ENCODE measurements at regions of chr17 and their contacts with region 1.

Region 1: GRCh38 chr17:70137451-70138230 is 31.7 kb upstream of the KCNJ2 start:
- DNase-seq: peak; percentile 41
- H3K4me3 Mint-ChIP-seq: no peak overlapping the region
- H3K27ac Mint-ChIP-seq: peak overlapping the region; percentile 61
- H3K4me1 Mint-ChIP-seq: peaks cover 23% of the 10 kb centered on the region
- H3K27me3 Mint-ChIP-seq: peaks cover 5% of the 10 kb centered on the region

Region 2: DNA sequence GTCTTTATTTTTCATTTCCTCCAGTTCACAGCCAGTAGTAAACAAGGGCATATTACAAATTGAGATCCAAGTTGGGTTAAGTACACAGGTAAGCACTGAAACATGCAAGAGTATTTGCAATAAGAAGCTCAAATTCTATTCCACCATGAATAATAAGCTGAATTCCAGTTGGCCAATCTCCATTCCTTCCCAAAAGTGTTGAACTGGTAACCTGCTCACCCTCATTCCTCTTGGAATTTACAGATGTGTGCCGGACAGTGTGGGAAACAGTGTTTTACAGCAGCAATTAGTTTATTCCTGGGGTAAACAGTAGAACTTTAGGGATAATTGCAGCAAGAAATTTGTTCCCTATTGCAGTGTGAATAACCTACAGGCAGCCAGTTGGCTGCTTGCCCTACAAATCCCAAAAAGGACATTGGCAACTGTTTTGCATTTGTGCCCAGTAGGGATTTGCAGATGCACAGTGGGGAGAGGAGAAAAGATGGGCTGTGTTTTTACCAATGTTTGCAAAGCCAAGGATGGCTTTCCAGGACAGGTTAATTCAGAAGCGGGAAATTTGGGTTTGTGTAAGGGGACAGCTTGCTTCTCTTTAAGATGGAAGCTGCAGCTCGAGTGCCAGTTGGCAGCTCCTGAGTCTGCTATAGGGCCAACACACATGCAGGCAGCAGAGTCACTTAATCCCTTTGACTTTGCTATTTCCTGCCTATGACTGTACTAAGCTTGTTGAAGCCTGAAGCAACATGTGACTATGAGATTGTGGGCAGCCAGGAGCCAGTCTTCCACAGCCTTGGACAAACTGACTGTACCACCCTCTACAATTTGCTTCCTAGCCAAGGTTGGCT is 404.2 kb before region 1 on chr17:
- intact Hi-C with region 1: loop called (anchors 5 kb)
- DNase-seq: no peak
- H3K4me3 Mint-ChIP-seq: no peak overlapping the region
- H3K27ac Mint-ChIP-seq: no peak overlapping the region
- H3K4me1 Mint-ChIP-seq: peaks cover 23% of the 10 kb centered on the region
- H3K27me3 Mint-ChIP-seq: peaks cover 1% of the 10 kb centered on the region

Region 3: GRCh38 chr17:69967910-69968411 is 169.7 kb before region 1 on chr17:
- intact Hi-C with region 1: no loop called
- DNase-seq: no peak
- H3K4me3 Mint-ChIP-seq: no peak overlapping the region
- H3K27ac Mint-ChIP-seq: no peak overlapping the region
- H3K4me1 Mint-ChIP-seq: no peaks in the 10 kb centered on the region
- H3K27me3 Mint-ChIP-seq: no peaks in the 10 kb centered on the region

Region 4: GRCh38 chr17:70053241-70054234 is 84.1 kb before region 1 on chr17:
- intact Hi-C with region 1: loop called (anchors 5 kb)
- DNase-seq: no peak
- H3K4me3 Mint-ChIP-seq: no peak overlapping the region
- H3K27ac Mint-ChIP-seq: no peak overlapping the region
- H3K4me1 Mint-ChIP-seq: peaks cover 14% of the 10 kb centered on the region
- H3K27me3 Mint-ChIP-seq: no peaks in the 10 kb centered on the region

Region 5: DNA sequence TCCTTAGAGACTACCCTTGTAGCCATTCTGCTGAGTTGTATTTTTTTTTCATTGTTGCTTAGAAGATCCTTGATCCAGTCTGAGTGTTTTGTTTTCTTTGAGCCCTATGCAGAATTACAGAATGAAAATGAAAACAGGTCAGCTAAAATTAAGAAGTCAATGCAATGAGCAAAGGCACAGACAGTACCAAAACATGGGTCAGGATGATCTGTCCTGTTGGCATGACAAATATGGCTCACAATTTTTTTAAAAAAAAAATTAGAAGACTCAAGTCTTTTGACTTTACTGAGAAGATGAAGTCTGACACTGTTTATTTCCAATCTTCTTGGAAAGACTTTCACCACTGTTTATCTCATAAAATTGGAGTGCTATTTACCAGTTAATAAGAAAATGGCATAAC is 30.2 kb before region 1 on chr17:
- intact Hi-C with region 1: loop called (anchors 2 kb)
- DNase-seq: no peak
- H3K4me3 Mint-ChIP-seq: no peak overlapping the region
- H3K27ac Mint-ChIP-seq: no peak overlapping the region
- H3K4me1 Mint-ChIP-seq: peaks cover 5% of the 10 kb centered on the region
- H3K27me3 Mint-ChIP-seq: no peaks in the 10 kb centered on the region